HEK293 (cell line): ENCODE measurements at regions of chr7 and their contacts with region 1.

Region 1: DNA sequence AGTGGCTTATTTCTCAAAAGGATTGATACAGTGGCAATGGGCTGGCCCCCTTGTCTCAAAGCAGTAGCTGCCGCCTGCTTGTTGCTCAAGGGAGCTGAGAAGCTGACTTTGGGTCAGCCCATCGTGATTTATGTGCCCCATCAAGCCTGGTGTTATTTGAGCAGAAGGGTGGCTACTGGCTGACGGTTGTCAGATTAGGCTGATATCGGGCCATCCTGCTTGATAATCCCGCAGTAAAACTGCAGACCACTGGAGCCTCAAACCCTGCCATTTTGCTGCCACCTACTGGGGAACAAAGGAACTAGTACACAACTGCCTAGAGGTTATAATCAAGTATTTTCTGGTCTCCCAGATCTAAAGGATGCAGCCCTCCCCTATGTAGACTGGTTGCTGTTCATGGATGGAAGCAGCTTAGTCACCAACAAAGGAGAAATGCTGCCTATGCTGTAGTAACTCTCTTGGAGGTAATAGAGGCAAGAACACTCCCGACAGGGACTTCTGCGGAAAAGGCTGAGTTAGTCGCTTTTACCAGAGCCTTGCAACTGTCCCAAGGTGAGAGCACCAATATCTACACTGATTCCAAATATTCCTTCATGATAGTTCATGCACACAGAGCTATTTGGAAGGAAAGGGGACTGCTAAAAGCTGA is 65.9 kb upstream of the ZNF92 start:
- H3K4me3 ChIP-seq: no peak overlapping the region
- H3K27ac ChIP-seq: no peak overlapping the region
- H3K4me1 ChIP-seq: no peaks in the 10 kb centered on the region
- CTCF ChIP-seq: peak; percentile 68

Region 2: DNA sequence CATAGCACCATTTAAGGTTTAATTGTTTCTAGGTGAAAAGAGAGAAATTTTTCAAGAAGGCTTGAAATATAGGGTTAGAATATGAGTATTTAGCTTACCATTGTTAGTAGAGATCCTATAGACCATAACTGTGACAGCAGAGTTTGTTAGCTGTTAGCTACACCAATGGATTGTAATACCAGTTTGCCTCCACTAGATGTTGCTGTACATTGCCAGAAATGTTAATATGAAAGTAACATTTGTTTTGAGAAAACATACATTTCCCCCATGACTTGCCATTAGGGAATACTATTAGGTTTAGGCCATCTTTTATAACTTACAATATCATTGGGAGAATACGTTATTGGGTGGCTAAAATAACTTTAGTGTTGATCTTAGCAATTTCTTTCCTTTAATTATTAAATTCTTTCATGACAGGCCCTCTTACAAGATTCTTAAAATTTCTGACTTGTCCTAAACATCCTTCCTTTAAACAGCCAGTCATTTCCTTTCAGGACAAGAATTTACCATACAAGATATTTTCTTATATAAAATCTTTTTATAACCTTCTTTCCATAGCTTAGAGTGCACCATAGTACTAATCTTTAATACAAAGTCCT is 356.4 kb before region 1 on chr7:
- CTCF ChIA-PET with region 1: interaction called, 19 read pairs
- POLR2A ChIA-PET with region 1: no interaction called
- H3K4me3 ChIP-seq: no peak overlapping the region
- H3K27ac ChIP-seq: no peak overlapping the region
- H3K4me1 ChIP-seq: no peaks in the 10 kb centered on the region
- CTCF ChIP-seq: no peak

Region 3: GRCh38 chr7:65216459-65216858 is 91.3 kb before region 1 on chr7:
- CTCF ChIA-PET with region 1: interaction called, 15 read pairs
- POLR2A ChIA-PET with region 1: no interaction called
- H3K4me3 ChIP-seq: no peak overlapping the region
- H3K27ac ChIP-seq: no peak overlapping the region
- H3K4me1 ChIP-seq: no peaks in the 10 kb centered on the region
- CTCF ChIP-seq: 0 out of 2 replicates have a peak, but pooled peaks have one; percentile 8

Region 4: DNA sequence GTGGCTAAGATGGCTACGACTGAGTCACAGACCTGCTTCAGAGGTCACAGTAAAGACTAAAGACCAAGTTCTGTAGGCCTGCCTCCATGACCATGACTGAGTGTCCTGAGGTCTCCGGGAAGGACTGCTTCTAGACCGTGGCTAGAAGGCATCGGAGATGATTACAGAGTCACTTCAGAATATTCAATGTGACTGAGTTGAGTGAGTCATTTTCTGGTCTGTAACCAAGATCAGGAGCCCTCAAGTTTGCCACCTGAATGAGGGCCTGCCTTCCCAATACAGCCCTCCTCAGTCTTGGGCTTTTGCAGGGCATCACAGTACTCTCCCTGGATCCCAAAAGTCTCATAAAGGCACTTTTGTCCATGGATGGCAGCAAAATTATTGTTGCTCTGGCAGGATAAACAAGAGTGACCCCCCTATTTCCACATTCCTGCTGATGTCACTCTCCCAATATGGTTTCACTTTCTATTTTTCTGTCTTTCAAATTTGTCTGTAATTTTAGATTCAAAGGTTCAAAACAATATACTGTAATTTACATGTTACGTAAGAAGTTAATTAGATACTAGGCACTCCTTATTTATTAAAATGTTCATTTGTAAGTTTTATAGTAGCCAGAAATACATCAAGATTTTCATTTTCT is 18.1 kb after region 1 on chr7:
- CTCF ChIA-PET with region 1: interaction called, 15 read pairs
- POLR2A ChIA-PET with region 1: no interaction called
- H3K4me3 ChIP-seq: no peak overlapping the region
- H3K27ac ChIP-seq: no peak overlapping the region
- H3K4me1 ChIP-seq: no peaks in the 10 kb centered on the region; the same call in 1 of the 2 replicates
- CTCF ChIP-seq: no peak